Caco-2 (cell line): ENCODE measurements at regions of chr2 and their contacts with region 1.

Region 1: DNA sequence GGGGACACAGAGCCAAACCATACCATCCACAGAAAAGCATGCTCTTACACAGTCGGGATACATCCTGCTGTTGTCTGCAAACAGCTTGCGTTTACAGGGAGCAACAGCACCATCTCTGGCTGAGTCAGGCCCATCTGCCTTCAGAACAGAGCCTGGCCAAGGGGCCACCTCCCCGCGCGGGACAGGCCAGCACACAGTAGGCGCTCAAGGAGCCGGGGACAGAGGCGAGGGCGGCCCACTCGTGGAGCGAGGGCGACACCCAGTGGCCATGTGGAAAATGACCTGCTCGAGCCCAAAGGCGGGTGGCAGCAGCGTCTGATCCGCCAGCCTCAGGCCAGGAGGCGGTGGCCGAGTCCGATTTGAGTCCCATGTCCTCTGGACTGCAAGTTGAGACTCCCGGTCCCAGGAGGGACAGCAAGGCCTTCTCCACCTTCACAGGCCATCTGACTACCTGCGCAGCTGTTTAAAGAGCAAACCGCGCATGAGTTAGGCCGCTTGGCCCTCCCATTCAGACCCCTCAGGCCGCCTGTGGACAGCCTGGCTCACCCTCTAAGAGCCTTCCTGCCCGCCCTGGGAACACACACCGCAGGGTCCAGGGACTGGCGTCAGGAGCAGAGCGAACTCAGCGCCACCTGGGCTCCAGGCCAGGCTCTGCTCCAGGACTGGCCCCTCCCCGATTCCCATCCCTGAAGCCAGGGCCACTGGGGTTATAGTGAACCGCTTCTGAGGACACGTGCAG is 38.3 kb downstream of the TTC32 start:
- DNase-seq: peak; percentile 66 to 85
- H3K4me3 ChIP-seq: no peak overlapping the region
- H3K4me3 Mint-ChIP-seq: no peak overlapping the region
- H3K27ac Mint-ChIP-seq: no peak overlapping the region
- H3K4me1 ChIP-seq: no peaks in the 10 kb centered on the region
- H3K4me1 Mint-ChIP-seq: no peaks in the 10 kb centered on the region
- H3K27me3 ChIP-seq: no peaks in the 10 kb centered on the region
- H3K27me3 Mint-ChIP-seq: no peaks in the 10 kb centered on the region
- CTCF ChIP-seq: peak; percentile 90 to 99

Region 2: DNA sequence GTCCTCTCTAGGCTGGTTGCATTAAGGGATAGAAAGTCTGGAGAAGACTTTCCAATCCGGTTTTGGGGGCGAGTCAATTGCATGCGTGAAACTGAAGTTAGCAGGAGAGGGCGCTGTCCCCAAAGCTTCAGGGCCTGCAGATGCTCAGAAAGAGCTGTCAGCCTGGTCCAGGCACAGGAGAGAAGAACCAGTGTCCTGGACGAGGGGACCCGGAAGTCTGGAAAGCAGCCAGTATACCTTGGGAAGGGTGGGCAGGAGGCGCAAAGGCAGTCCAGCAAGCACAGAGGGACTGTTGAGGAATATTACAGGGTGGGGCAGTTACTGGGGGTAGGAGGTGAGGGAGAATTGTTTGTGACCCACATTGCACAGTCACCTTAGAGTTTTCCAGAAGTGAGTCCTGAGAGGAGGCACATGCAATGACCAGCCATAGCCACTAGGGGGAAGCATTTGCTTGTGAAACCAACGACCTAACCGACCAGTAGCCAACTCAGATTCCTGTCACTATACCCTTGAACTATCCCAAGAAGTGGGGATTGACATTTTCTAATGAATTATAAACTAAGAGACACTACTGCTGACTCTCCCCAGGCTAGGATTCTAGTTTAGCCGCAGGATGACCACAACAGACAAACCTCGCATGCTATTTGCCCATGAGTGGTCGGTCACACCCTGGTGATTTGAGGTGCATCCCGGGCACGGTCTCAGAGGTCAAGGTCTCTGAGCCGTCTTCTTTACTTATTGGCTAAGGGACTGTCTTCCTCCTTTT is 1475.8 kb before region 1 on chr2:
- CTCF ChIA-PET with region 1: no interaction called
- POLR2A ChIA-PET with region 1: no interaction called
- intact Hi-C with region 1: loop called (anchors 5 kb)
- DNase-seq: peak; percentile 72 to 82
- H3K4me3 ChIP-seq: no peak overlapping the region
- H3K4me3 Mint-ChIP-seq: no peak overlapping the region
- H3K27ac Mint-ChIP-seq: no peak overlapping the region
- H3K4me1 ChIP-seq: no peaks in the 10 kb centered on the region; the same call in 1 of the 2 replicates
- H3K4me1 Mint-ChIP-seq: no peaks in the 10 kb centered on the region
- H3K27me3 ChIP-seq: no peaks in the 10 kb centered on the region; the same call in 1 of the 2 replicates
- H3K27me3 Mint-ChIP-seq: peaks cover 3% of the 10 kb centered on the region
- CTCF ChIP-seq: peak; percentile 95 to 98

Region 3: GRCh38 chr2:18520451-18521425 is 1342.7 kb before region 1 on chr2:
- CTCF ChIA-PET with region 1: no interaction called
- POLR2A ChIA-PET with region 1: no interaction called
- intact Hi-C with region 1: loop called (anchors 1 kb)
- DNase-seq: peak; percentile 75 to 79
- H3K4me3 ChIP-seq: no peak overlapping the region
- H3K4me3 Mint-ChIP-seq: no peak overlapping the region
- H3K27ac Mint-ChIP-seq: no peak overlapping the region
- H3K4me1 ChIP-seq: 0 out of 2 replicates have a peak, but pooled peaks cover 4% of the 10 kb centered on the region
- H3K4me1 Mint-ChIP-seq: no peaks in the 10 kb centered on the region
- H3K27me3 ChIP-seq: no peaks in the 10 kb centered on the region
- H3K27me3 Mint-ChIP-seq: peaks cover 3% of the 10 kb centered on the region
- CTCF ChIP-seq: peak; percentile 93 to 96

Region 4: DNA sequence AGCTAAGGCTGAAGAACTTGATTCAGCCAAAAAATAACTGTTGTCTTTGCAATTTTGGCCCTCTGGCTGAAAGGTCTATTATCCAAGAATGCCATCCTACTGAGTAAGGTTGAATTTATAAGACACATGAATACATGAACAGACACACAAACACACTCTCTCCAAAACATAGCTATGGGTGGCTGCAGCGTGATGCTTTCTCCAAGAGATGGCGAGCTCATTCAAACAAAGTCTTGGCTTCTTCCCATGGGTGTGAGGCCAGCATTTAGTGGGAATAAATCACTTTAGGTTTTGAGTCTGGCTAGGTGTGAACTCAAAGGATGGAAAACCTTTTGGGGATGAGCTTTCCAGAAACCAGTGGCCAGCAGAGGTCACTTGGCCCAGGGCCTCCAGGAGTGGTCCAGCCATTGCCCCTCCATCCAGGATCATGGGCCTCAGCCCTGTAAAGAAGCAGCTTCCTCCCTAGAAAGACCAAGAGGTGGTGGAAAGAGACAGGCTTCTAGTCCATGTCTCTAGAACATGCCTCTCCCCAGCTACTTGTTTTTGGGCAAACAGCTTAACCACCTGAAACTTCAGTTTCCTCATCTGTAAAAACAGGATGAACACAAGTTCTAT is 494.0 kb before region 1 on chr2:
- CTCF ChIA-PET with region 1: no interaction called
- POLR2A ChIA-PET with region 1: no interaction called
- intact Hi-C with region 1: loop called (anchors 1 kb)
- DNase-seq: no peak
- H3K4me3 ChIP-seq: no peak overlapping the region
- H3K4me3 Mint-ChIP-seq: no peak overlapping the region
- H3K27ac Mint-ChIP-seq: no peak overlapping the region
- H3K4me1 ChIP-seq: no peaks in the 10 kb centered on the region
- H3K4me1 Mint-ChIP-seq: no peaks in the 10 kb centered on the region
- H3K27me3 ChIP-seq: no peaks in the 10 kb centered on the region
- H3K27me3 Mint-ChIP-seq: peaks cover 21% of the 10 kb centered on the region
- CTCF ChIP-seq: peak in 1 of 2 experiments; percentile 12

Region 5: GRCh38 chr2:19769513-19769912 is 94.0 kb before region 1 on chr2:
- CTCF ChIA-PET with region 1: no interaction called
- POLR2A ChIA-PET with region 1: no interaction called
- intact Hi-C with region 1: loop called (anchors 1 kb)
- DNase-seq: no peak
- H3K4me3 ChIP-seq: no peak overlapping the region
- H3K4me3 Mint-ChIP-seq: no peak overlapping the region
- H3K27ac Mint-ChIP-seq: no peak overlapping the region
- H3K4me1 ChIP-seq: peaks cover 4% of the 10 kb centered on the region; the same call in 1 of the 2 replicates
- H3K4me1 Mint-ChIP-seq: peaks cover 7% of the 10 kb centered on the region
- H3K27me3 ChIP-seq: no peaks in the 10 kb centered on the region
- H3K27me3 Mint-ChIP-seq: peaks cover 6% of the 10 kb centered on the region
- CTCF ChIP-seq: peak; percentile 28 to 37

Region 6: GRCh38 chr2:19801367-19802080 is 61.9 kb before region 1 on chr2:
- CTCF ChIA-PET with region 1: no interaction called
- POLR2A ChIA-PET with region 1: no interaction called
- intact Hi-C with region 1: no loop called
- DNase-seq: no peak
- H3K4me3 ChIP-seq: no peak overlapping the region
- H3K4me3 Mint-ChIP-seq: no peak overlapping the region
- H3K27ac Mint-ChIP-seq: no peak overlapping the region
- H3K4me1 ChIP-seq: 0 out of 2 replicates have a peak, but pooled peaks cover 5% of the 10 kb centered on the region
- H3K4me1 Mint-ChIP-seq: peaks cover 8% of the 10 kb centered on the region
- H3K27me3 ChIP-seq: no peaks in the 10 kb centered on the region
- H3K27me3 Mint-ChIP-seq: peaks cover 11% of the 10 kb centered on the region
- CTCF ChIP-seq: no peak

Region 7: GRCh38 chr2:19846030-19846429 is 17.4 kb before region 1 on chr2:
- CTCF ChIA-PET with region 1: no interaction called
- POLR2A ChIA-PET with region 1: no interaction called
- intact Hi-C with region 1: no loop called
- DNase-seq: no peak
- H3K4me3 ChIP-seq: no peak overlapping the region
- H3K4me3 Mint-ChIP-seq: no peak overlapping the region
- H3K27ac Mint-ChIP-seq: no peak overlapping the region
- H3K4me1 ChIP-seq: no peaks in the 10 kb centered on the region
- H3K4me1 Mint-ChIP-seq: no peaks in the 10 kb centered on the region
- H3K27me3 ChIP-seq: no peaks in the 10 kb centered on the region
- H3K27me3 Mint-ChIP-seq: peaks cover 14% of the 10 kb centered on the region
- CTCF ChIP-seq: no peak

Region 8: DNA sequence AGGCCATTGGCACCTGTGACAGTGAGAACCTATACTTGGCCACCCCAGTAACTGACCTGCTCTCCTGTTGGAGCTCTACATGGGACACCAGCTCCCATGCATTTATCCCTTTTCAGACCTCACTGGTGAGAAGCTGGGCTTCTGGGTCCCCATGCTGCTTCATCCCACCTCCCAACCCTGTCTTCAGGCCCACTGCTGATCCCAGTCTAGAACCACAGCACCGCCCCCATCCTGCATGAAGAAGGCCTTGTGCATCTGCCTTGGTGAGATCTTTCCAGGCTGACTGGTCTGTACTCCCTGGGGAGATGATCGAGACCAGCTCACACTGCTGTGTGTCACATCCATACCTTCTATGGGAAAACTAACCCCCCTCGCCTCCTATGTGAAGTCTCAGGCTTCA is 15.6 kb after region 1 on chr2:
- CTCF ChIA-PET with region 1: no interaction called
- POLR2A ChIA-PET with region 1: no interaction called
- intact Hi-C with region 1: no loop called
- DNase-seq: no peak
- H3K4me3 ChIP-seq: no peak overlapping the region
- H3K4me3 Mint-ChIP-seq: no peak overlapping the region
- H3K27ac Mint-ChIP-seq: no peak overlapping the region
- H3K4me1 ChIP-seq: no peaks in the 10 kb centered on the region
- H3K4me1 Mint-ChIP-seq: no peaks in the 10 kb centered on the region
- H3K27me3 ChIP-seq: no peaks in the 10 kb centered on the region; the same call in 1 of the 2 replicates
- H3K27me3 Mint-ChIP-seq: no peaks in the 10 kb centered on the region
- CTCF ChIP-seq: no peak

Region 9: GRCh38 chr2:19911799-19912509 is 48.5 kb after region 1 on chr2:
- CTCF ChIA-PET with region 1: no interaction called
- POLR2A ChIA-PET with region 1: no interaction called
- intact Hi-C with region 1: no loop called
- DNase-seq: no peak
- H3K4me3 ChIP-seq: no peak overlapping the region
- H3K4me3 Mint-ChIP-seq: no peak overlapping the region
- H3K27ac Mint-ChIP-seq: no peak overlapping the region
- H3K4me1 ChIP-seq: no peaks in the 10 kb centered on the region
- H3K4me1 Mint-ChIP-seq: no peaks in the 10 kb centered on the region
- H3K27me3 ChIP-seq: no peaks in the 10 kb centered on the region
- H3K27me3 Mint-ChIP-seq: no peaks in the 10 kb centered on the region
- CTCF ChIP-seq: no peak